OCI-LY7 (cell line): ENCODE measurements at regions of chr14 and their contacts with region 1.

Region 1: DNA sequence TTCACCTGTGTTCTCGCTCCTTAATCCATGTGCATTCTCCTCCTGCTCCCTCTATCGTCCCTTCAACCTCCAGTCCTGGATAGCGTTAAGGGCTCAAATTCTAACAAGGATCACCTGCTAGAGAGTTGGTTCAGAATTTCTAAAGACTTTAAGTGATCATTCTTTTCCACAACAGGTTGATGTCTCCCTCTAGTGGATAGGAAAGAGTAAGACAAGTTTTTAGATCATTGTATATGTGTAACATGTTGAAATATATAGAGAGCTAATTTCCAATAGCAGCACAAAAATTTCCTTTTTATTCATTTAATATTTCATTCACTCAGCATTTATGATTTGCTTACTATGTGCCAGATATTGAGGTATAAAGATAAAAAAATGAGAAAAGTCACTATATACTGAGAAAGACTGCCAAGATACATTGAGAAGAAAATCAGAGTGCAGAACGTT is 9.3 kb upstream of the ESR2 start:
- DNase-seq: peak; percentile 72
- H3K4me3 ChIP-seq: no peak overlapping the region
- H3K27ac ChIP-seq: no peak overlapping the region
- H3K4me1 ChIP-seq: no peaks in the 10 kb centered on the region
- CTCF ChIP-seq: peak; percentile 96

Region 2: DNA sequence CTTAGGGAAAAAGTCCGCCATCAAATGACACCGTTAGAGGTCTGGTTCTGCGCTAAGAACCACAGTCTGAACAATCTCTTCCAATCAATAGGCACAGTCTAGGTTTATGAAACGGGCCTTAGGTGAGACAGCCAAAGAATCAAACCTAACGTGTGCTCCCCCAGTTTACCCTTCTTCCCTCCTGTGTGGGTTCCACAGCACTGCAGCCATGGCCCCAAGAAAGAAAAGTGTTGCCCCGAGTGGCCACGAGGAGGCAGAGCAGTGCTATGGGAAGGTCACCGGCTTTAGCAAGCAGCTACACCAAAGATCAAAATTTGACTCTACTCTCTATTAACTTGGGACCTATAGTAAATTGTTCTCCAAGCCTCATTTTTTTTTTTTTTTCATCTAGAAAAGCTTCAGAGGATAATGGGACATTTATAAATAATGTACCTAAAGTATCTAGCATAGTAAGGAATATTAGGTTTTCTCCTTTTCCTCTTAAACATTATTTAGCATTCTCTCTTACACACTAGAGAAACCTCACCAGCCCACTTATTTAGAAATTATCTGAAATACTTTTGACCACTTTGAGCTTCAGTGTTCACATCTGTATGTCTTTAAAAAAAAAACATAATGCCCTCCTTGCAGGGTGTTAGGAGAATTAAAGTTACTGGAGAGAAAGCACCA is 914.6 kb before region 1 on chr14:
- CTCF ChIA-PET with region 1: no interaction called
- POLR2A ChIA-PET with region 1: no interaction called
- intact Hi-C with region 1: loop called (anchors 10 kb)
- DNase-seq: peak; percentile 65
- H3K4me3 ChIP-seq: no peak overlapping the region
- H3K27ac ChIP-seq: no peak overlapping the region
- H3K4me1 ChIP-seq: no peaks in the 10 kb centered on the region
- CTCF ChIP-seq: peak; percentile 96

Region 3: DNA sequence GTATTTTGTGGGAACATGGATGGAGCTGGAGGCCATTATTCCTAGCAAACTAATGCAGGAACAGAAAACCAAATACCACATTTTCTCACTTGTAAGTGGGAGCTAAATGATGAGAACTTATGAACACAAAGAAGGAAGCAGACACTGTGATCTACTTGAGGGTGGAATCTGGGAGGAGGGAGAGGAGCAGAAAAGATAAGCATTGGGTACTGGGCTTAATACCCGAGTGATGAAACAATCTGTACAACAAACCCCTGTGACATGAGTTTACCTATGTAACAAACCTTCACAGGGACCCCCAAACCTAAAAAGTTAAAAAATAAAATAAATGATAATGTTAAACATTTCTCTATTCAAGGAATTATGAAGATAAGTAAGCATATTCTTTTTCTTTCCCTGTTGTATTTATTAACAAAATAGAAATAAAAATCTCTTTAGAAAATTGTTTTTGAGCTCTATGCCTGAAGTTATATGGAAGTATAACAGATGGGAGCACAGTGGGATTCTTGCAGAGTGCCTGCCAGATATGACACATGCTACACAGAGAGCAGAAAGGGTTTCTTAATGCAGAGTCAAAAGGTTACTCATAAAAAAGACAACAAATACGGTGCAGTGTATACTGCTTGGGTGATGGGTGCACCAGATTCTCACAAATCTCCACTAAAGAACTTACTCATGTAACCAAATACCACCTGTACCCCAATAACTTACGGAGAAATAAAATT is 502.7 kb before region 1 on chr14:
- CTCF ChIA-PET with region 1: no interaction called
- POLR2A ChIA-PET with region 1: interaction called, 6 read pairs
- intact Hi-C with region 1: loop called (anchors 1 kb)
- DNase-seq: no peak
- H3K4me3 ChIP-seq: no peak overlapping the region
- H3K27ac ChIP-seq: no peak overlapping the region
- H3K4me1 ChIP-seq: peaks cover 9% of the 10 kb centered on the region
- CTCF ChIP-seq: no peak

Region 4: DNA sequence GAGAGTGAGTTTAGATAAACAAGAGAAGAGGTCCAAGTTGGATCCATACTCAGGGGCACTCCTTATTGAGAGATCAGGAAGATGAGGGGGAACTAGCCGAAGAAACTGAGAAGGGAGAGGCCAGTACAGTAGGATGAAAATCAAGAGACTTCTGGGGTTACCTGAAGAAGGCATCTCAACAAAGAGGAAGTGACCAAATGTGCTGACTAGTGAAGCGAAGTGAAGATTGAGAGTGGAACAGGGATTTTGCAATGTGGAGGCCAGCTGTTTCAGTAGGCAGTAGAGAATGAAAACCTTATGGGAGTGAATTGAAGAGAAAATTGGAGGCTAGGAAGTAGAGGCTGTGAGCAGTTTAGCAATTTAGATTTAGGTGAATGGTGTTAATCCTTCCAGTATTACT is 297.7 kb before region 1 on chr14:
- CTCF ChIA-PET with region 1: no interaction called
- POLR2A ChIA-PET with region 1: no interaction called
- intact Hi-C with region 1: loop called (anchors 2 kb)
- DNase-seq: peak; percentile 41
- H3K4me3 ChIP-seq: no peak overlapping the region
- H3K27ac ChIP-seq: no peak overlapping the region
- H3K4me1 ChIP-seq: peaks cover 5% of the 10 kb centered on the region
- CTCF ChIP-seq: no peak

Region 5: DNA sequence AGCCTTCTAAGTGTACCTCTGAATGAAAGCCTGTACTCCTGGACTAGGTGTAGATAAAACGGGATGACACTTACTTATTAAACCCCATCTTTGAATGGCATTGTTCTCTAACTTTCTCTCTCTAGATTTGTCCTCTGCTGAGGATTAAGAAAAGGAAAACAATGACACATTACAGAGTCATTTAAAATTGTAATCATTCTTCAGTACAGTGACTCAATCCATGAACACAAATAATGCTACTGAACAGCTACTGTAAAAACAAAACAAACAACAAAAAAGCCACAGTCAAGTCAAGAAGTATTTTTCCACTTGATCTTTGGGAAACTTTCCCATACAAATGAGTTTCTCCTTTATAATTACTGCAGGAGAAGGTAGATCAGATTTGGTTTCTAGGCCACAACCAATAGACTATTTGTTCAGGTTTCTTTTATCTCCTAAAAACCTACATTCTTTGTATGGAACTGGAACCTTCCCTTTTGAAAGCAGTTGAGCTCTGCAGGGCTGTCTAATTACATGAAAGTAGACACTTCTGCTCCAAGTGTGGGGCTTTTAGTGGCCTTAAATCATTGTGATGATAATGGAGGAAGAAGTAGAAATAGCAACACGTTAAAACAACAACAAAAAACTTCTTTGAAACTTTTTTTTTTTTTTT is 228.4 kb before region 1 on chr14:
- CTCF ChIA-PET with region 1: no interaction called
- POLR2A ChIA-PET with region 1: interaction called, 4 read pairs
- intact Hi-C with region 1: loop called (anchors 5 kb)
- DNase-seq: no peak
- H3K4me3 ChIP-seq: no peak overlapping the region
- H3K27ac ChIP-seq: no peak overlapping the region
- H3K4me1 ChIP-seq: no peaks in the 10 kb centered on the region
- CTCF ChIP-seq: no peak